Heart right ventricle (tissue), 16 donors: ENCODE measurements at regions of chr18 and their contacts with region 1.

Region 1: GRCh38 chr18:74368901-74369705 is 53.5 kb downstream of the C18orf63 start:
- DNase-seq: no peak
- ATAC-seq: no peak
- H3K4me3 ChIP-seq: no peak overlapping the region
- H3K27ac ChIP-seq: no peak overlapping the region
- H3K4me1 ChIP-seq: peaks cover 0 to 10% (median 0%) of the 10 kb centered on the region in 9 donors
- H3K27me3 ChIP-seq: no peaks in the 10 kb centered on the region
- CTCF ChIP-seq: no peak

Region 2: DNA sequence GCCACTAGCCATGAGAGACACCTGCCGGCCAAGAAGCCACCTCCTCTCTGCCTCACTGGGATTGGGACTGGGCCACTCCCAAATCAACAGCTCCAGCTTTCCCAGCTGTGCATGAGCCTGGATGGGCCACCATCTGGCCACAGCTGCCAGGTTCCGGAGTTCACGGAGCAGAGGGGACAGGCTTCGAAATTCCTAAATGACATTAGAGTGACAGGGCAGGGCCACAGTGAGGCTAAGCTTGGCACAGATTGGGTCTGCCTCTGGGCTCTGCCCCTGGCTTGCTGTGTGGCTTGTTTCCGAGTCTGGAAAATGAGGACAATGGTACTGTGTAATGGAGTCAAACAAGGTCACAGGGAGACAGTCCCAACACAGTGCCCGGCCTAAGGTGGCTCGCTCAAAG is 81.5 kb after region 1 on chr18:
- intact Hi-C with region 1: loop called in 1 of 10 experiments (anchors 5 kb)
- DNase-seq: peak; percentile 30 to 44
- ATAC-seq: peak; percentile 60 to 85 (median 75)
- H3K4me3 ChIP-seq: no peak overlapping the region
- H3K27ac ChIP-seq: peak overlapping the region in 8 of 10 donors; percentile 45 to 77 (median 54)
- H3K4me1 ChIP-seq: peaks cover 0 to 62% (median 35%) of the 10 kb centered on the region in 9 donors
- H3K27me3 ChIP-seq: peaks cover 0 to 33% (median 15%) of the 10 kb centered on the region in 7 donors
- CTCF ChIP-seq: peak in 2 of 9 donors; percentile 10 to 15